ENCODE measurements at regions of chr2 and their contacts with region 1.

Region 1: DNA sequence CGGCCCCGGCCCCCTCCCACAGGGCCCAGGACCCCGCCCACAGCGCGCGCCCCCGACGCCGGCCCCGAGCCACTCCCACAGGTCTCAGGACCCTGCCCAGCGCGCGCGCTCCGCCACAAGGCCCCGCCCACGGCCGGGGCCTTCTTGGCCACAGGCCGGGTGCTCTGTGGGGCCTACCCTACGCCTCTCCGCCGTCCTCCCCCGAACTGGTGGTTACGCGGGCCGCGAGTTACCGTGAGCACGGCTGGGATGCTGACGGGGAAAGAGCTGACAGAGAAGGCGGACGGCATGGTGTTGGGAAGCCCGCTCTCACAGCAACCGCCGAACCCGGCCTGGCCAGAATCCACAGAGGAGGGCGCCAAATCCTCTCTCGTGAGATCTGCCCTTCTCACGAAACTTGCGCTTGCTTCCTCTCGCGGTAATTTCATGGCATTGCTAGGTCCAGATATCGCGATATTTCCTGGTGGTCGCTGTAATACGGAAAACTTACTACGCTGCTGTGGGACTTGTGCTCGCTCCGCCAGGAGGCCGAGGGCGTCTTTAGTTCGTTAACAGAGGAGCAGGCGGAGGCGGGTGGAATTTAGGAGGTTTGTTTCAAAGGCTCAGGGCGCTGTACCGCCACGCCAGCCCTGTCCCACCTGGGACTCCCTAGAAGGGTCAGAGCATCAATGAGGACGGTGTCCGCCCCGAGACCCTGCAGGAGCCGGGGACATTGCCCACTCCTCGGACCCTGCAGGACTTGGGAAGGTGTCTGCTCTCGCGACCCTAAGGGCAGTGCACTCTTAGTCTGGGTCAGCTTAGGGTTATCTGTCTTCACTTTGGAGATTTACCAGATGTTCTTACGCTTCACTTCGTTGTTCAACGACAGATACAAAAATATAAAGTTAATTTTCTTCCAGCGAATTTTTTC is at the start of gene TMEM18:
- DNase-seq: peak; percentile 88
- H3K4me3 Mint-ChIP-seq: peak within 1 kb of the TSS; percentile 94
- H3K27ac Mint-ChIP-seq: peak within 1 kb of the TSS; percentile 97
- H3K4me1 Mint-ChIP-seq: peaks cover 42% of the 10 kb centered on the region
- H3K27me3 Mint-ChIP-seq: peaks cover 2% of the 10 kb centered on the region
- total RNA-seq, gene TMEM18: 23.3 and 24.9 TPM in 2 replicates

Region 2: DNA sequence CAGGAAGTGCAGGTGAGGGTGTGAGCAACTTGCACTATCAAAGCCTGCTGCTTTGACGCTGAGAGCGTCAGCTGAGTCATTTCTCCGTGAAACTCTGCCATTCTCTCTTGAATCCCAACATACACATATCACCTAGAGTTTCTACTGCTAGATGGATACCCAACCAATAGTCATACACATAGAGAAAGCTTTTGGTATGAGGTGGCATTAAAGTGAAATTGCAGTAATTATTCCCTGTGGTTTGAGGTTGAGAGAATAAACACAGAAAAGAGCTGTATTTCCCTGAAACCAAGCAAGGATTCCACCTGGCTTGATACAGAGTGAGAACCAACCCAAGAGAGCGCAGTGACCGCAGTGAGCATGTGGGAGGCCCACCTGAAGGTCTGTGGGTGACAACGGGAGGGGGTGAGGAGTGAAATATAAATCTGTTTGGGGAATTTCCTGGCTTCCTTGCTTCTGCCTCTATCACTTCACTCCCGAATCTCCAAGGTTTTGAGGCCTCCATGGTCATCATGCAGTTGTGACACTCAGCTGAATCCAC is 28.7 kb after region 1 on chr2:
- intact Hi-C with region 1: no loop called
- DNase-seq: no peak
- H3K4me3 Mint-ChIP-seq: no peak overlapping the region
- H3K27ac Mint-ChIP-seq: no peak overlapping the region
- H3K4me1 Mint-ChIP-seq: no peaks in the 10 kb centered on the region
- H3K27me3 Mint-ChIP-seq: peaks cover 10% of the 10 kb centered on the region

Region 3: GRCh38 chr2:741195-741496 is 63.8 kb after region 1 on chr2:
- intact Hi-C with region 1: loop called (anchors 2 kb)
- DNase-seq: no peak
- H3K4me3 Mint-ChIP-seq: no peak overlapping the region
- H3K27ac Mint-ChIP-seq: no peak overlapping the region
- H3K4me1 Mint-ChIP-seq: peaks cover 5% of the 10 kb centered on the region
- H3K27me3 Mint-ChIP-seq: peaks cover 31% of the 10 kb centered on the region